ENCODE measurements at regions of chr2 and their contacts with region 1.

Region 1: GRCh38 chr2:75646583-75647425 is at the start of gene MRPL19:
- DNase-seq: peak; percentile 93
- H3K4me3 Mint-ChIP-seq: peak within 1 kb of the TSS; percentile 89
- H3K27ac Mint-ChIP-seq: peak within 1 kb of the TSS; percentile 96
- H3K4me1 Mint-ChIP-seq: no peaks in the 10 kb centered on the region
- H3K27me3 Mint-ChIP-seq: no peaks in the 10 kb centered on the region
- CTCF ChIP-seq: no peak
- total RNA-seq, gene MRPL19: 49.1 and 65.4 TPM in 2 replicates

Region 2: GRCh38 chr2:75489721-75490120 is 157.1 kb before region 1 on chr2:
- CTCF ChIA-PET with region 1: no interaction called
- POLR2A ChIA-PET with region 1: no interaction called
- intact Hi-C with region 1: no loop called
- DNase-seq: no peak
- H3K4me3 Mint-ChIP-seq: no peak overlapping the region
- H3K27ac Mint-ChIP-seq: no peak overlapping the region
- H3K4me1 Mint-ChIP-seq: no peaks in the 10 kb centered on the region
- H3K27me3 Mint-ChIP-seq: no peaks in the 10 kb centered on the region
- CTCF ChIP-seq: no peak

Region 3: GRCh38 chr2:75634945-75635344 is 11.9 kb before region 1 on chr2:
- CTCF ChIA-PET with region 1: interaction called, 17 read pairs
- POLR2A ChIA-PET with region 1: interaction called, 11 read pairs
- intact Hi-C with region 1: no loop called
- DNase-seq: peak; percentile 25
- H3K4me3 Mint-ChIP-seq: no peak overlapping the region
- H3K27ac Mint-ChIP-seq: no peak overlapping the region
- H3K4me1 Mint-ChIP-seq: peaks cover 6% of the 10 kb centered on the region
- H3K27me3 Mint-ChIP-seq: peaks cover 29% of the 10 kb centered on the region
- CTCF ChIP-seq: no peak

Region 4: DNA sequence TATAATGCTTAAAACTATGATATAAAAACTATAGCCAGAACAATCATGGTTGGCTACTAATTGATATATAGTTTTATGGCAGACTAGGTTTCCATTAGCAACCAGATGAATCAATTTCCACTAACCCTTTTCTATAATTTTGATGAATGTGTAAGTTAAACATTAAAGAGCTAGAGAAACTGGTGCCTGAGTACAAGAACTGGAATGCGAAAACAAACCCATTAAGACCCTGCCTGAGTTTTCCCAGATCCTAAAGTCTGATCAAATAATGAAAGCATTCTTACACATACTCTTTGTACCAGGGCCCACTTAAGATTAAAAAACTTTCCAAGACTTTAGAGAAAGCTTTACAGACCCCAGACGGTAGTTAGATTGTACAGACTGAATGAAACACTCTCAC is 21.1 kb after region 1 on chr2:
- CTCF ChIA-PET with region 1: interaction called, 10 read pairs
- POLR2A ChIA-PET with region 1: interaction called, 5 read pairs
- intact Hi-C with region 1: no loop called
- DNase-seq: no peak
- H3K4me3 Mint-ChIP-seq: no peak overlapping the region
- H3K27ac Mint-ChIP-seq: no peak overlapping the region
- H3K4me1 Mint-ChIP-seq: no peaks in the 10 kb centered on the region
- H3K27me3 Mint-ChIP-seq: no peaks in the 10 kb centered on the region
- CTCF ChIP-seq: no peak

Region 5: DNA sequence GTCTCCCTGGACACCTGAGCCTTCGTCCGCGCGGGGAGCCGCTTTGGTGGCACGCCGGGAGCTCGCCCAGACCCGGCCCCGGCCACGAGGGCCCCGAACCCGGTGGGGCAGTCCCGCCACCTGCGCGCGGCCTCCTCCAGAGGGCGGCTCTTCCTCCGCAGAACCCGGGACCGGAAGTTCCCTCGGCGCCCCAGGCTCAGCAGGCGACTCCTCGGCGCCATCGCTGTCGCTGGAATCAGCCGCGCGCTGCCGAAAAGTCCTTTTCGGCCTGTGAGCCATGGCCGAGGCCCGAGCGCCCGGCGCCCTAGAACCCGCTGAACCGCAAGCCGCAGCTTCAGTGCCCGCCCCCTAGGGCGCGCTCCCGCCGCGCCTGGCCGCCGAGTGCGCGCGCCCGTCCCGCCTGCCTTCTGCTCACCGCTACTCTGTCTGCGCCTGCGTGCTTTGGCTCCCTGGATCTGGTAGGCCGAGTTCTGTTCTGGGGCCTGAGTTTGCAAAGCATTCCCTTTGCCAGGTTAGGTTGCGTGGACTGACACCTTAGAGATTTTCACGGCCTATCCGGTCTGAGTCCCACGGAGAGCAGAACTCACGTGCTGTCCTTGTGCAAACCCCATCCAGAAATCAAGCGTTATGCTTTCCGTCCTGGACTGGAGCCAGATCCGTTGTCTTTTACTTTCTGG is 63.9 kb after region 1 on chr2 and contains the start of gene GCFC2:
- CTCF ChIA-PET with region 1: no interaction called
- POLR2A ChIA-PET with region 1: interaction called, 21 read pairs
- intact Hi-C with region 1: no loop called
- DNase-seq: peak; percentile 89
- H3K4me3 Mint-ChIP-seq: peak within 1 kb of the TSS; percentile 73
- H3K27ac Mint-ChIP-seq: peak within 1 kb of the TSS; percentile 90
- H3K4me1 Mint-ChIP-seq: peaks cover 21% of the 10 kb centered on the region
- H3K27me3 Mint-ChIP-seq: no peaks in the 10 kb centered on the region
- CTCF ChIP-seq: peak; percentile 36
- total RNA-seq, gene GCFC2: 38.5 and 41.3 TPM in 2 replicates

Measured in MCF 10A (cell line).